PC-9 (cell line): ENCODE measurements at regions of chr7 and their contacts with region 1.

Region 1: DNA sequence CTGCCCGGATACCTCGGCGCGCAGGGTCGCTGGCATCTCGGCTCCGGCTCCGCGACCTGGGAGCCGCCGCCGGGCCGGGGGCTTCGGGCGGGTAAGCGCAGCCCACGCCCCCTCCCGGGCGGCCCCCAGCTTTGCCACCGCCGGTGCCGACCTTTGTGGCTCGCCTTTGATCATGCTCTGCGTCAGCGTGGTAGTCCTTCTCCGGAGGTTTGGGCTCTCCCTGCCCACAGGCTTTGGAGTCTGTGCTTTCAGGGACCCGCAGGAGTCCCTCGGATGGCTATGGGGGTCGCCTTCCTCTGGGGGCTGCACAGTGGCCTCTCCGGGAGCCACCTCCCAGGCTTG is 7.3 kb downstream of the ATP6V1F start:
- DNase-seq: no peak
- H3K4me3 ChIP-seq: no peak overlapping the region; the same call in 1 of the 2 replicates
- H3K27ac ChIP-seq: no peak overlapping the region
- H3K4me1 ChIP-seq: peaks cover 38% of the 10 kb centered on the region
- H3K27me3 ChIP-seq: no peaks in the 10 kb centered on the region
- CTCF ChIP-seq: no peak

Region 2: DNA sequence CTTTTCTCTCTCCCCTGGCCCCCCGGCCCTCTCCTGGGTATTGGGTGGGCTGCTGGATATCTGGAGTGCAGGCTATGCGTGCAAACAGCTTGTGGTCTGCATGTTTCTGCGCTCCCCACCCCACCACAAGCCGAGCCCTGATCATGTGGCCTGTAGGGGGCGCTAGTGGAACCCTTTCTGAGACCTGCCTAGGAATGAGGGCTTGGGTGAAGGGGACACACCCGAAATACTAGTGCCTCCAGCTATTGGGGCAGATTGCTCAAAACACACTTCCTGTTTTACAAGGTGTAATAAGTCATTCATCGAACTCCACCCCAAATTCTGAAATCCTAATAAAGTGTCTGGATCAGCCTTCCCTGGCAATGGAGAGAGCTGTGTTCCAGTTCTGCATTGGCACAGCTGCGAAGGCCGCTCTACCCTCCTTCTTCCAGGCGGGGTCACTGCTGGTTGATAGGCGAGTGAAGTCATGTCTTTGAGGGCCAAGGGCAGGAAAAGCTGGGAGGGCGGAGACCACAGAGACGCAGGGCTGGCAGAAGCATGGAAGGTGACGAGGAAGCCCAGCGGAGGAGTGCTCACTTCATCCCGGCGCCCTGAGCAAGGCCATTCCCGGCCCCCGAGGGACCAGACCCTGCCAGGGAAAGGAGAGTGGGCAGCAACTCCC is 488.6 kb before region 1 on chr7:
- CTCF ChIA-PET with region 1: interaction called, 11 read pairs
- POLR2A ChIA-PET with region 1: no interaction called
- intact Hi-C with region 1: no loop called
- DNase-seq: peak; percentile 27 to 83
- H3K4me3 ChIP-seq: no peak overlapping the region
- H3K27ac ChIP-seq: no peak overlapping the region
- H3K4me1 ChIP-seq: peaks cover 49% of the 10 kb centered on the region
- H3K27me3 ChIP-seq: no peaks in the 10 kb centered on the region
- CTCF ChIP-seq: peak; percentile 81

Region 3: DNA sequence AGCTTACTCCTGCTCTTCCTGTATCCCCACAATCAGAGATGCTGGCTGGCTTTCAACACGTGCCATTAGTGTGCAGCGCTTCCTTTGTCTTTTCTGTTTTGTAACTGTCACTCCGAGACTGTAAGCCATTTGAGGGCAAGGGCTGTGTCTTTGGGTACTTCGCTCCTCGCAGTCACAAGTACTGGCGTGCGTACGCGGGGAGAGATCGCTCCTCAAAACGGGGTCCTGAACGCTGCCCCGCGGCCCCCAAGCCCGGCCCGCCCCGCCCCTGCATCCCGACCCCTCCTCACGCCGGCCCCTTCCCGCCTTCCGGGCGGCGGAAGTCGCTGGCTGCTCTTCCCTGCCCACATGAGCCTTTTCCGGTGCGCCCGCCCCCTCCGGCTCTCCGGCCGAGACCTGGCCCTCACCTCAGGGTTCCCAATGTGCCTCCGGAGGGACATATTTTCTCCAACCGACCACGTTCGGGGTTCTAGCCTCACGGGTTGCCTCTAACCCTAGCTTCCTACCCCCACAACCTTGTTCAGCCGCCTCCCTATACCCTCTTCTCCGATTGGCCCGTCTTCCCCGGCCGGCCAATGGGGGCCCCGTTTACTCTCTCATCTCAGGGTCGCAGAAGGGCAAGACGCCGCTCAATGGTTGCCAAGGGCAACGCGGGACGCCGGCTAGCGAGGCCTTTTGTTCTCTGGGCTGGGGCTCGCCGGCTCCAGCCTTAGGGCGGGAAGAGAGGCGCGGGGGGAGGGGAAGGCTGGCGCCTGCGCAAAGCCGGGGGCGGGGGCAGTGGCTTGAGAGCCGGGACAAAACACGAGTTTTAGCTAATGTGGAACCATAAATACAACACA is 1570.8 kb after region 1 on chr7 and contains the start of gene CEP41:
- CTCF ChIA-PET with region 1: no interaction called
- POLR2A ChIA-PET with region 1: interaction called, 15 read pairs
- intact Hi-C with region 1: no loop called
- DNase-seq: peak; percentile 93 to 99
- H3K4me3 ChIP-seq: peak within 1 kb of the TSS; percentile 73
- H3K27ac ChIP-seq: peak within 1 kb of the TSS; percentile 65
- H3K4me1 ChIP-seq: peaks cover 15% of the 10 kb centered on the region
- H3K27me3 ChIP-seq: no peaks in the 10 kb centered on the region
- CTCF ChIP-seq: no peak
- total RNA-seq, gene CEP41: 16.3 and 18.0 TPM in 2 replicates